ENCODE measurements at regions of chr20 and their contacts with region 1.

Region 1: DNA sequence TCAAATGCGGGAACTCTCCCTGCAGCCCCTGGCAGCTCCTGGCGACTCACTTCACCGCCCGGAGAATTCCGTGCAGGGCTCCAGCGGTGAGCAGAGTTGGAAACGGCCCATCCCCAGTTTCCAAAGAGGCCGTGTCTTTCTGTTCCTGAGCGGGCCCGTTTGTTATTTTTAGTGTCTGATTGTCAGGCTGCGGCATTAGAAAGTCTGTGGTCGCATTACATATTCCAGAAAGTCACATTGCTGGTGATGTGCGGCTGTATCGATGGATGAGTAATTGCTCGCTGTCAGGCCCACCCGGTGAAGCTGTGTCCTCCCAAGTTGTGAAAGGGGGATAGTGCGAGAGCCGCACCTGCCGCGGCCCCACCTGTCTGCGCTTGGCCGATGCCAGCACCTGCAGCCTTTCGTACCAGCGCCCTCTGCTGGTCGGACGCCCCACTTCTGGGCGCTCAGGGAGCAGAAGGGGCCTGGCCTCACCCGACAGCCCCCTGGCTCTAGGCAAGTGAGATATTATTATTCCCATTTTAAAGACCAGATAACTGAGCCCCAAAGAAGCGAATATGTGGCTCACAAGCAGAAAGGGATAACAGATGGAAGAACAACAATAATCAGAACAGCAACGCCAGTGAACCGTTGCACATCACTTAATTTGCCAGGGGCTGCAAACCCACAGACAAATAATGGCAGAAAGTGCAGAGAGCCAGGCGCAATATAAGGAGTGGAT is 244.9 kb downstream of the TSHZ2 start:
- DNase-seq: peak; percentile 65 to 86 (median 79)
- ATAC-seq: peak; percentile 91
- H3K4me3 ChIP-seq: peak overlapping the region; percentile 34
- H3K4me3 Mint-ChIP-seq: peak overlapping the region; percentile 48 to 80 (median 74)
- H3K27ac ChIP-seq: peak overlapping the region; percentile 48
- H3K27ac Mint-ChIP-seq: peak overlapping the region; percentile 44 to 97 (median 74)
- H3K4me1 ChIP-seq: peaks cover 0 to 33% of the 10 kb centered on the region in 2 donors
- H3K4me1 Mint-ChIP-seq: peaks cover 14 to 46% (median 41%) of the 10 kb centered on the region in 7 donors
- H3K27me3 ChIP-seq: no peaks in the 10 kb centered on the region
- H3K27me3 Mint-ChIP-seq: peaks cover 0 to 4% (median 0%) of the 10 kb centered on the region in 5 donors

Region 2: GRCh38 chr20:52312132-52312729 is 904.8 kb before region 1 on chr20:
- CTCF ChIA-PET with region 1: interaction called, 44 read pairs
- POLR2A ChIA-PET with region 1: interaction called, 3 read pairs
- intact Hi-C with region 1: loop called (anchors 1 kb)
- DNase-seq: peak in 8 of 9 donors; percentile 35 to 76 (median 70)
- ATAC-seq: peak; percentile 85
- H3K4me3 ChIP-seq: no peak overlapping the region
- H3K4me3 Mint-ChIP-seq: peak overlapping the region in 2 of 10 donors; percentile 32 to 41
- H3K27ac ChIP-seq: no peak overlapping the region
- H3K27ac Mint-ChIP-seq: peak overlapping the region in 4 of 9 donors; percentile 21 to 57 (median 38)
- H3K4me1 ChIP-seq: peaks cover 0 to 8% of the 10 kb centered on the region in 2 donors
- H3K4me1 Mint-ChIP-seq: peaks cover 7 to 57% (median 40%) of the 10 kb centered on the region in 7 donors
- H3K27me3 ChIP-seq: no peaks in the 10 kb centered on the region
- H3K27me3 Mint-ChIP-seq: peaks cover 0 to 7% (median 0%) of the 10 kb centered on the region in 5 donors

Region 3: DNA sequence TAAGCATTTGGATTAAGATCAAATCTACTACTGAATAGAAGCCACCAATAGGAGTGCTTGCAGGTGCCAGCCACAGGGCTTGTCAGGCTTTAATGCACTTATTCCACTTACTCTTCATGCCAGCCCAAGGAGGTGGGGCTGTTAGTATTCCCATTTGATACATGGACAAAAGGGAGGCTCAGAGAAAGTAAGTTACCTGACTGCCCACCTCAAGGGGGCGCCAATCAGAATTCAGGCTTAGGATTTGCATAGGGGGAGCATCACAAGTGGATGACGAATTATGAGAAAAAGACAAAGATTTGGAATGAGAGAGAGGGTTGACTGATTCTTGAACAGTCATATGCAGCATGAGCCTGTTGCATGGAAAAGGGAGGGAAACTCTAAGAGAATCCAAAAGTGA is 433.2 kb before region 1 on chr20:
- CTCF ChIA-PET with region 1: no interaction called
- POLR2A ChIA-PET with region 1: no interaction called
- intact Hi-C with region 1: loop called in 1 of 2 experiments (anchors 5 kb)
- DNase-seq: peak in 1 of 9 donors; percentile 24
- ATAC-seq: no peak
- H3K4me3 ChIP-seq: no peak overlapping the region
- H3K4me3 Mint-ChIP-seq: no peak overlapping the region
- H3K27ac ChIP-seq: no peak overlapping the region
- H3K27ac Mint-ChIP-seq: no peak overlapping the region
- H3K4me1 ChIP-seq: no peaks in the 10 kb centered on the region
- H3K4me1 Mint-ChIP-seq: peaks cover 0 to 5% (median 3%) of the 10 kb centered on the region in 7 donors
- H3K27me3 ChIP-seq: no peaks in the 10 kb centered on the region
- H3K27me3 Mint-ChIP-seq: peaks cover 0 to 6% (median 3%) of the 10 kb centered on the region in 5 donors

Region 4: DNA sequence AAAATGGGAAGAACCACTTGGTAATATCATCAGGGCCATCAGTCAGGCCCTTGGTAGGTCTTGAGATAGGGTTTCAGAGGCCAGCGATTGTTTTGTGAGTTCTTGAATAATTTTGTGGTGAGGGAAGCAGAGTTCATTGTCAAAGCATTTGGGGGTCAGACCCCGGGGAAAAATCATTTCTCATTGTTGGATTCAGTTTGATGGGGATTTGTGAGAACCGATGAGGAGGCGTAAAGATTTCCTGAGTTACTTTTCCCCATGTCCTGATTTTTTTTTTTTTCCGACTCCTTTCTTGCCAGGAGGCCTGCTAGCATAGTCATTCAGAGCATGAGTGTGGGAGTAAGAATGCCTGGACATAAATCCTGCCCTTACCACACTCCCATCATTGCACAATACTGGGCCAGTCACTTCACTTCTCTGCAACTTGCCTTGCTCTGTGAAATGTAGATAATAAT is 184.5 kb before region 1 on chr20:
- CTCF ChIA-PET with region 1: interaction called, 3 read pairs
- POLR2A ChIA-PET with region 1: no interaction called
- intact Hi-C with region 1: loop called in 1 of 2 experiments (anchors 2 kb)
- DNase-seq: no peak
- ATAC-seq: no peak
- H3K4me3 ChIP-seq: no peak overlapping the region
- H3K4me3 Mint-ChIP-seq: no peak overlapping the region
- H3K27ac ChIP-seq: no peak overlapping the region
- H3K27ac Mint-ChIP-seq: peak overlapping the region in 3 of 9 donors; percentile 11 to 42 (median 31)
- H3K4me1 ChIP-seq: peaks cover 0 to 19% of the 10 kb centered on the region in 2 donors
- H3K4me1 Mint-ChIP-seq: peaks cover 22 to 70% (median 51%) of the 10 kb centered on the region in 7 donors
- H3K27me3 ChIP-seq: no peaks in the 10 kb centered on the region
- H3K27me3 Mint-ChIP-seq: peaks cover 0 to 7% (median 0%) of the 10 kb centered on the region in 5 donors

Region 5: GRCh38 chr20:53454675-53455276 is 237.8 kb after region 1 on chr20:
- CTCF ChIA-PET with region 1: no interaction called
- POLR2A ChIA-PET with region 1: no interaction called
- intact Hi-C with region 1: no loop called
- DNase-seq: no peak
- ATAC-seq: no peak
- H3K4me3 ChIP-seq: no peak overlapping the region
- H3K4me3 Mint-ChIP-seq: no peak overlapping the region
- H3K27ac ChIP-seq: no peak overlapping the region
- H3K27ac Mint-ChIP-seq: peak overlapping the region in 1 of 9 donors; percentile 46
- H3K4me1 ChIP-seq: no peaks in the 10 kb centered on the region
- H3K4me1 Mint-ChIP-seq: peaks cover 0 to 1% (median 0%) of the 10 kb centered on the region in 7 donors
- H3K27me3 ChIP-seq: no peaks in the 10 kb centered on the region
- H3K27me3 Mint-ChIP-seq: no peaks in the 10 kb centered on the region

Region 6: DNA sequence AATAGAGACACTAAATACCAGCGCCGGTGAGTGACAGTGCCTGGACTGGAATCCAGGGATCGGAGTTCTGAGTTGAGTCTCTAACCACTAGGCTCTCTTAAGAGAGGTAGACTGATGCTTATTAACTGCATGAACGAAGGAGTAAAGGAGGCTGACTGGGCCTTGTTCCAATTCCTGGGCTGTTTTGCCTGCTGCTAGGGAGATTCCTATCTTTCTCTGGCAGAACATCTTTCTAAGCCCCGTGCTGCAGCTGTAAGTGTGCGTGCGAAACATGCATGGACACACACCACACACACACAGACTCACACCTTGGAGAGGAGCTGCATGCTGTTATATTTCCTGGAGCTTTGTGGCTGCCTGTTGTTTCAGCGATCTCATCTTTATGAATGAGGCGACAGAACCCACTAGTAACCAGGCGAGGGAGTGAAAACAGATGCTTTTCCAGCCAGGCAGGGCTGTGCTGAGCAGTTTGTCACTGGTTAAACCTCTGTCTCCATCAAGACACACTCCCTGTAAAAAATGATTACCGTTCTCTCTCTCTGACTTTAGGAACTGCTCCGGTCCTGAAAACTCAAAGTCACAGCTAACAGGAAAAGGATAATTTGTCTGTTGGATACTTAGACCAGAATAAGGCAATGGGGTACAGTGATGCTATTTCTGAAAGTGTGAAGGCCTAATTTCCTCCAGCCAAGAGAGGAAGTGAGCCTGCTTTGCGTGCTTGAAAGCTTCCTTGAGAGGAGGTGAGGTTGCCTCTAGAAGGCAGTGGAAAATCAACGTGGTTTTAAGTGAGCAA is 534.0 kb after region 1 on chr20:
- CTCF ChIA-PET with region 1: no interaction called
- POLR2A ChIA-PET with region 1: no interaction called
- intact Hi-C with region 1: loop called in 1 of 2 experiments (anchors 10 kb)
- DNase-seq: peak in 8 of 9 donors; percentile 21 to 60 (median 40)
- ATAC-seq: peak; percentile 61
- H3K4me3 ChIP-seq: no peak overlapping the region
- H3K4me3 Mint-ChIP-seq: peak overlapping the region; percentile 51 to 84 (median 68)
- H3K27ac ChIP-seq: peak overlapping the region; percentile 63
- H3K27ac Mint-ChIP-seq: peak overlapping the region; percentile 91 to 99 (median 96)
- H3K4me1 ChIP-seq: peaks cover 53 to 66% of the 10 kb centered on the region in 2 donors
- H3K4me1 Mint-ChIP-seq: peaks cover 45 to 77% (median 72%) of the 10 kb centered on the region in 7 donors
- H3K27me3 ChIP-seq: no peaks in the 10 kb centered on the region
- H3K27me3 Mint-ChIP-seq: no peaks in the 10 kb centered on the region

Region 7: GRCh38 chr20:54207743-54208547 is 990.9 kb after region 1 on chr20 and contains the start of gene PFDN4:
- CTCF ChIA-PET with region 1: no interaction called
- POLR2A ChIA-PET with region 1: no interaction called
- intact Hi-C with region 1: loop called in 1 of 2 experiments (anchors 10 kb)
- DNase-seq: peak; percentile 69 to 85 (median 80)
- ATAC-seq: peak; percentile 95
- H3K4me3 ChIP-seq: peak within 1 kb of the TSS; percentile 65
- H3K4me3 Mint-ChIP-seq: peak within 1 kb of the TSS; percentile 75 to 98 (median 97)
- H3K27ac ChIP-seq: peak within 1 kb of the TSS; percentile 89
- H3K27ac Mint-ChIP-seq: peak within 1 kb of the TSS; percentile 99 to 100 (median 100)
- H3K4me1 ChIP-seq: peaks cover 14 to 15% of the 10 kb centered on the region in 2 donors
- H3K4me1 Mint-ChIP-seq: peaks cover 20 to 41% (median 38%) of the 10 kb centered on the region in 7 donors
- H3K27me3 ChIP-seq: no peaks in the 10 kb centered on the region
- H3K27me3 Mint-ChIP-seq: no peaks in the 10 kb centered on the region
- total RNA-seq, gene PFDN4: 14.6 to 30.4 (median 17.7) TPM

Measured in naive thymus-derived CD4-positive, alpha-beta T cell (primary cell).